ENCODE measurements at regions of chr13 and their contacts with region 1.

Region 1: DNA sequence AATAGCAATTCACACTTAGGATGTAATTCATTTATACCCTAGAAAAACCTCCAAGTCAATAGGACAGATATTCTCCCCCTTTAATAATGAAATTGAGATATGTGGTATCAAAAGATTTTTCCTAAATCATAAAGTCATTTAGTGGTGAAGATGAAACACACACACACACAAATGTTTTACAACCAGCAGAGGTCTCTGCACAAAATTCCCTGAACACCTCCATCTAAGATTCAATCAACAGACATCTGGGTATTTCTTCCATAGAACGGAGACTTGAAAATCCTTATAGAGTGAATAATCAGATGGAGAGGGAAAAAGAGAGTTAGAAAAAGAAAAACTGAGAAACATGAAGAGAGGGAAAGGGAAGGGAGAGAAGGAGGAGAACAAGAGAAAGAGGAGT is 52.8 kb downstream of the MYCBP2 start:
- DNase-seq: no peak
- ATAC-seq: no peak
- H3K4me3 Mint-ChIP-seq: no peak overlapping the region
- H3K27ac Mint-ChIP-seq: peak overlapping the region; percentile 59
- H3K4me1 Mint-ChIP-seq: peaks cover 20% of the 10 kb centered on the region
- H3K27me3 Mint-ChIP-seq: no peaks in the 10 kb centered on the region
- CTCF ChIP-seq: no peak

Region 2: GRCh38 chr13:77250975-77251374 is 23.2 kb before region 1 on chr13:
- CTCF ChIA-PET with region 1: no interaction called
- POLR2A ChIA-PET with region 1: no interaction called
- intact Hi-C with region 1: loop called (anchors 2 kb)
- DNase-seq: no peak
- ATAC-seq: no peak
- H3K4me3 Mint-ChIP-seq: no peak overlapping the region
- H3K27ac Mint-ChIP-seq: no peak overlapping the region
- H3K4me1 Mint-ChIP-seq: peaks cover 3% of the 10 kb centered on the region
- H3K27me3 Mint-ChIP-seq: no peaks in the 10 kb centered on the region
- CTCF ChIP-seq: no peak

Region 3: DNA sequence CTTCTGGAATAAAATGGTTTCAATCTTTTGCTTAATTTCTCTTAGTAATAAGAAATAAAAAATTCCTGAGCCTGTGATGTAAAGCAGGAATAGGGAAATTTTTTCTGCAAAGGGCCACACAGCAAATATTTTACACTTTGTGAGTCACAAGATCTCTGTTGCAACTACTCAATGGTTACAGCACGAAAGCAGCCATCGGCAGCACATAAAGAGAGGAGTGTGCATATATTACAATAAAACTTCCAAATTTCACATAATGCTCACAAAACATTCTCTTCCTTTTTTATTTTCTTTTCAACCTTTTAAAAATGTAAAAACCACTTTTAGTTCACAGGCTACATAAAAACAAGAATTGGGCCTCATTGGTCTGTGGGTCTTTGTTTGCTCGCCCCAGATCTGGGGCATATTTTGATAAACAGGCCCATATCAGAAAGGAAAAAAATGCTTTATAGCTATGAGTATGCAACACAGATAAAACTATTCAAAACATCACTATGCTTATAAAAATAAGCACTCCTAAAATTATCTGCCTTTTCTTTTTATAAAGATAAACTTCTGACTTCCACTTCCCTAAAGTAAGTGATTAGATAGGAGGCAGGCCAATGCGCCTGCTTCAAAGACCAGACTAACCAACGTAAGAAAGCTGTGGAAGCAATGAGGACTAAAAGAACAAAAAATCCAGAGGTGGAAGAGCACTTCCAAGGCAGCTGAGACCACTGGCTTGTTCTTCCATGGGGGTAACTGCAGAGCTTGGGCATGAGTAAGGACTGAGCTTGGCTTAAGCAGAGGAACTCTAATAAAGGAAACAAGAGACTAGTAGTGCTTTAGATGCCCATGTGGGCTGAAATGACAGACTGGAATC is 26.3 kb after region 1 on chr13:
- CTCF ChIA-PET with region 1: no interaction called
- POLR2A ChIA-PET with region 1: interaction called, 13 read pairs
- intact Hi-C with region 1: loop called (anchors 2 kb)
- DNase-seq: no peak
- ATAC-seq: peak; percentile 46
- H3K4me3 Mint-ChIP-seq: peak overlapping the region; percentile 57
- H3K27ac Mint-ChIP-seq: peak overlapping the region; percentile 87
- H3K4me1 Mint-ChIP-seq: peaks cover 84% of the 10 kb centered on the region
- H3K27me3 Mint-ChIP-seq: no peaks in the 10 kb centered on the region
- CTCF ChIP-seq: no peak